ENCODE measurements at regions of chr5 and their contacts with region 1.

Region 1: GRCh38 chr5:53019320-53019719 is 30.2 kb downstream of the ITGA2 start:
- DNase-seq: no peak
- H3K4me3 ChIP-seq: no peak overlapping the region
- H3K27ac ChIP-seq: no peak overlapping the region
- H3K4me1 ChIP-seq: no peaks in the 10 kb centered on the region
- H3K27me3 ChIP-seq: no peaks in the 10 kb centered on the region
- CTCF ChIP-seq: no peak
- POLR2A ChIP-seq: no peak

Region 2: GRCh38 chr5:52993367-52993766 is 26.0 kb before region 1 on chr5:
- intact Hi-C with region 1: loop called (anchors 2 kb)
- DNase-seq: no peak
- H3K4me3 ChIP-seq: no peak overlapping the region
- H3K27ac ChIP-seq: peak overlapping the region in 1 of 2 donors; percentile 20
- H3K4me1 ChIP-seq: no peaks in the 10 kb centered on the region
- H3K27me3 ChIP-seq: no peaks in the 10 kb centered on the region
- CTCF ChIP-seq: no peak
- POLR2A ChIP-seq: no peak